GM18951 (cell line): ENCODE measurements at regions of chr19 and their contacts with region 1.

Region 1: DNA sequence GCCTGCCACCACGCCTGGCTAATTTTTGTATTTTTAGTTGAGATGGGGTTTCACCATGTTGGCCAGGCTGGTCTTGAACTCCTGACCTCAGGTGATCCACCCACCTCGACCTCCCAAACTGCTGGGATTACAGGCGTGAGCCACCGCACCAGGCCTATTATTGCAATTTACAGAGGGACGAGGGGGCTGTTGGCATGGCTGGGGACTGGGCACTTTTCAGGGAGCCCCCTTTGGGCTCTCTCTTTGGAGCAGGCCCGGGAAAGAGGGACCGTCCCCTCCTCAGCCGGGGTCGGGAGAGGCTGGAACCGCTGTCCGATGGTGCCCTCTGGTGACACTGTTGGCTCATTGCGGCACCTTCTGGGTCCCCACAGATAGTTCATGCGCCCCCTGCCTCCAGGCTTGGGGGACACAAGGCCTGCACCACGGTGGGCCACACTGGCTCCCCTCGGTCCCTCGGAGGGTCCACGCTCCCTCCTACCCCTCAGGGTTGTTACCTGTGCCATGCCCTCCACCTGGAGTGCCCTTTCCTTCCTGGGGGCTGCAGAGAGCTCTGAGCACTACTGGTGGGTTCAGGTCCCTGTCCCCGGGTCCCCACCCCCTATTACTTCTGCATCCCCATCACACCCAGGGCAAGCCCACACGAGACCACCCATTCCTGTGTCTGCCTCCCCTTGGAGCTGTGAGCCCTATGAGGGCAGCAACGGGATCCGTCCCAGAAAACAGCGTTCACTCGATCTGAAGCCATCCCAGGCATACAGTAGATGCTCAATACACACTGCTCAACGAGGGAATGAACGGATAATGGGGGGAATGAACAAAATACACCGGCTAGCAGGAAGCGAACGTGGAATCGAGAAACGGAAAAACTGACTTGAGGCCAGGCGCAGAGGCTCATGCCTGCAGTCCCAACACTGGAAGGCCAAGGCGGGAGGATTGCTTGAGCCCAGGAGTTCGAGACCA is 12.5 kb downstream of the FEM1A start:
- POLR2A ChIP-seq: no peak

Region 2: DNA sequence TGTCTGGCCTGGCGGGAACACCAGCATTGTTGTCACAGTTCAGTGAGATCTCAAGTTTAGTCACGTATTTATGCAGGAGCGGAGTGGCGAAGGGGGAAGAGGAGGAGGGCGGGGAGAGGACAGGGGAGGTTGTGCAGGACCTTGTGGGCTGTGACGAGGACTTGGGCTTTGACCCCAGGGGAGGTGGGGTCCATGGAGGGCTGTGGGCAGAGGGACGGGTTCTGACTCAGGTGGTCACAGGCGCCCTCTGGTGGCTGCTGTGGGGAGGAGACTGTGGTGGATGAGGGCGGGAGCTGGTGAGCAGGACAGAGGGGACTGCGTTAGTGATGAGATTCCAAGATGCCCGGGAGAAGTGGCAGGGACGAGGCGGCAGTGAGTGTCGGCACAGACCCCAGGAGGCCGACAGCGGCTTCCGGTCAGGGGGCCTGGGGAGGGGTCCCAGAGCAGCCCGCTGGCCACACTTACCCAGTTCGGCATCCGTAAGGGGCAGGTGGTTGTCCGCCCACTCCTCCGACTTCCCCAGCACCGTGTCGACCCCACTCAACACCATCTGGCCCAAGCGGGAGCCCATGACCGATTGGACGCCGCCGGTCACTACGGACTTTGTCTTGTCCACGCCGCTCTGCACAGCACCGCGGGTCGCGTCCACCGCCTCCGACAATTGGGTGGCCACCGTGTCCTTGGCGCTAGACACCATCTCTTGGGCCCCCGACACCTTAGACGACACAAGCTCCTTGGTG is 47.7 kb after region 1 on chr19:
- in situ Hi-C with region 1: loop called (anchors 10 kb)
- POLR2A ChIP-seq: no peak

Region 3: GRCh38 chr19:5186293-5187050 is 382.5 kb after region 1 on chr19:
- in situ Hi-C with region 1: no loop called
- POLR2A ChIP-seq: no peak